ENCODE measurements at regions of chr5 and their contacts with region 1.

Region 1: DNA sequence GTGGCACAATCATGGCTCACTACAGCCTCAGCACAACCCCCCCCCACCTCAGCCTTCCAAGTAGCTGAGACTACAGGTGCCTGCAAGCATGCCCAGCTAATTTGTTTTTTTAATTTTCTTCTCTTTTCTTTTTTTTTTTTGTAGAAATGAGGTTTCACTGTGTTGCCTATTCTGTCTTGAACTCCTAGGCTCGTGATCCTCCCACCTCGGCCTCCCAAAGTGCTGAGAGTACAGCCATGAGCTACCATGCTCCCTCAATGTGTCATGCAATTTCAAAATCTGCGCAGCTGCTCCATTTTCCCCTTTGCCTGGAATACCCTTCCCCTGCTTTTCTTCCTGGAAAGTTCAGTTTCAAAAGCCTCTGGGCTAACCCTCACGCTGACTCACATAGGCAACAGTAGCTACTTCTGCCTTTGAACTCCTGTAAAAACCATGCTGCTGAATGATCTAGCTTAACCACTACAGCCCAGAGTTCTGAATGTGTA is 71.0 kb upstream of the IL7R start:
- DNase-seq: peak; percentile 70
- ATAC-seq: peak; percentile 83
- H3K4me3 Mint-ChIP-seq: peak overlapping the region; percentile 33
- H3K27ac Mint-ChIP-seq: peak overlapping the region; percentile 90
- H3K4me1 Mint-ChIP-seq: peaks cover 79% of the 10 kb centered on the region
- H3K27me3 Mint-ChIP-seq: no peaks in the 10 kb centered on the region
- CTCF ChIP-seq: no peak

Region 2: GRCh38 chr5:34886392-34887119 is 899.1 kb before region 1 on chr5:
- CTCF ChIA-PET with region 1: no interaction called
- POLR2A ChIA-PET with region 1: no interaction called
- intact Hi-C with region 1: no loop called
- DNase-seq: no peak
- ATAC-seq: no peak
- H3K4me3 Mint-ChIP-seq: no peak overlapping the region
- H3K27ac Mint-ChIP-seq: no peak overlapping the region
- H3K4me1 Mint-ChIP-seq: no peaks in the 10 kb centered on the region
- H3K27me3 Mint-ChIP-seq: peaks cover 5% of the 10 kb centered on the region
- CTCF ChIP-seq: no peak

Region 3: DNA sequence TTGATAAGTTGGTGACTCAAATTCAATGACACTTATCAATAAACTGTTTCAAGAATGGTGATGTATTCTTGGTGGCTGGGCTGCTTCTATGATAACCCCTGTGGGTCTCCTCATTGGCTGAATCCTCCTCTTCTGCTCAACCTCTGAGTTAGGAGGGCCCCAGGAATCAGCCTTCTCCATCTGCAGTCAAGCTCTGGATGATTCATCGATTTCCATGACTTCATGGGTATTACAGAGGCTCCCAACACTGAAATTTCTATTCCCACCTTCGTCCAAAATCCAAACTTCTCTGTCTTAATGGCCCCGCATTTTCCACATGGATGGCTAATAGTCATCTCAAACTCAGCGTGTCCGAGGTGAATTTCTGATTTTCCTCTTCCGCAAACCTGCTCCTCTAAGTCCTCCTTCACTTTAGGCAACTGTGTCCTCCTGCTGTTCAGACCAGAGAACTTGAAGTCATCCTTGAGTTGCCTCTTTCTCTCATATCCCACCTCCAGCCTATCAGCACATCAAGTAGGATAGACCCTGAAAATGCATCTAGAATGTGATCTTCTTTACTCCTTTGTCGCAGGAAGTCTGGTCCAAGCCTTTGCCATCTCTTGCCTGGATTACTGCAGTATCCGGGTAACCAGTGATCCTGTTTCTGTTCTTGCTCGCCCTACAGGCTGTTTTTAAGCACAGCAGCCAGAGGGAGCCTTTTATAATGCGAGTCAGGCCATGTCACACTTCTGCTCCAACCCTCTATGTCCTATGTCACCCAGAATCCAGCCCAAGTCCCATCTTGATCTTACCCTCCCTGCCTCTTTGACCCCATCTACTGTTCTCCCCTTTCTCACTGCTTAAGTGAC is 29.7 kb after region 1 on chr5:
- CTCF ChIA-PET with region 1: interaction called, 44 read pairs
- POLR2A ChIA-PET with region 1: interaction called, 41 read pairs
- intact Hi-C with region 1: loop called (anchors 2 kb)
- DNase-seq: peak; percentile 49
- ATAC-seq: peak; percentile 42
- H3K4me3 Mint-ChIP-seq: no peak overlapping the region
- H3K27ac Mint-ChIP-seq: no peak overlapping the region
- H3K4me1 Mint-ChIP-seq: peaks cover 50% of the 10 kb centered on the region
- H3K27me3 Mint-ChIP-seq: no peaks in the 10 kb centered on the region
- CTCF ChIP-seq: peak; percentile 59

Measured in activated CD8-positive, alpha-beta T cell treated with anti-CD3 and anti-CD28 coated beads for 36 hours (primary cell).